Activated T-helper 2 cell treated with anti-CD3 and anti-CD28 coated beads, Interferon-gamma antibody, Interleukin-2, Interleukin-4, amounts not matched to agents 10 μg/mL and 5 μg/mL and 100 μg/mL, durations not matched to agents 14 hours and 24 hours and 36 hours (primary cell): ENCODE measurements at regions of chr16 and their contacts with region 1.

Region 1: DNA sequence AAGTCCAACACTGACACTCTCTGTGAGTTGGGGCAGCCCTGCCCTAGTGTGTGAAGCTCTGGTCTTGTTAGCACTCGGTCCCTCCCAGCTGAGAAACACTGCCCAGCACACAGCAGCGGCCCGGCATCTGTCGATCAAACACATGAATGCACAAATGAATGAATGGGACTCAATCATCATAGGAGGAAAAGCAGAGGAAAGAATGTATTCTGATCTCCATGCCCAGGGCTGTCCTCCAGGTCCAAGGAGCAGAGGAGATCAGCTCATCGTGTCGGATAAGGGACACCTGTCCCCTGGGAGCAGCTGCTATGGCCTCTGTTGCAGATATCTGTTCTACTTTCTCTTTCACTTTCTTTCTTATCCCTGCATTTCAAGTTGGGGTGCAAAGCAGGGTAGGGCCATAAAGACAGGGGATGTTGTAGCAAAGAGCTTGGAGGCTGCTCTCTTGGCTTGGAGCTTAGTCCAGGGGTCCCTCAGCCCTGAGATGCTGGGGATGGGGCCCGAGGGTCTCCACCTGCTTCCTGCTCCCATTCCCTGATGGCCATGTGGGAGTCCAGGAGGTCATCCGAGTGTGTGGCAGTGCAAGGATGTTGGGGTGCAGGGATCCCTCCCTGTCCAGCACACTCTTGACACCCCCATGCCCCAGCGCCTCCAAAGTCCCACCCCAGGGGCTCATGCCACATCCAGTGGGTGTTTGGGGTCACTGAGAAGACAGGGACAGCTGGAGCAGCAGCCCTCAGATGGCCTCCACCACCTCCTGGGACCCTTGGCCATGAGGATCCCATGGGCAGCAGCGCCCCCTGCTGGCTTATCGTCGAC is 88.2 kb downstream of the IRF8 start:
- DNase-seq: no peak
- H3K4me3 Mint-ChIP-seq: no peak overlapping the region
- H3K27ac Mint-ChIP-seq: peak overlapping the region; percentile 0
- H3K4me1 Mint-ChIP-seq: peaks cover 48% of the 10 kb centered on the region
- H3K27me3 Mint-ChIP-seq: no peaks in the 10 kb centered on the region

Region 2: DNA sequence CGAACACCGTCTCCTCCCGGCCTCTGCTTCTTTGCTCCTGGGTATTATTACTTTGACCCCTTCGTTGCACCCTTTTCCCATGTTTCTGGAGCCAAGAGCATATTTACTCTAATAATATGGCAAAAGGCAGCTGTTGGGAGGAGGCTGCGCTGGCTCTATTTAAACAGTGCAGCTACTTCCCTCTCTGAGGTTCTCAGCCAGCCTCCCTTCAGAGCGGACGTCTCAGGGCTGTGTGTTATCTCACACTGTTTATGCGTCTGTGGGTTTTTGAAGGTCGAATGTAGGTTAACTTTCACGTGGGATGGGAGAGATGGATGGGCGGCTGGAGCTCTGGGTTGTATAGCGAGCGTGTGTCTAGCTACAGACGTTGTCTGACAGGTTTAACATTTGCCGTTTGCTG is 142.4 kb before region 1 on chr16:
- intact Hi-C with region 1: no loop called
- DNase-seq: no peak
- H3K4me3 Mint-ChIP-seq: no peak overlapping the region
- H3K27ac Mint-ChIP-seq: no peak overlapping the region
- H3K4me1 Mint-ChIP-seq: peaks cover 4% of the 10 kb centered on the region
- H3K27me3 Mint-ChIP-seq: peaks cover 15% of the 10 kb centered on the region

Region 3: GRCh38 chr16:85869785-85870558 is 117.2 kb before region 1 on chr16:
- intact Hi-C with region 1: loop called (anchors 2 kb)
- DNase-seq: no peak
- H3K4me3 Mint-ChIP-seq: no peak overlapping the region
- H3K27ac Mint-ChIP-seq: no peak overlapping the region
- H3K4me1 Mint-ChIP-seq: peaks cover 26% of the 10 kb centered on the region
- H3K27me3 Mint-ChIP-seq: peaks cover 45% of the 10 kb centered on the region

Region 4: DNA sequence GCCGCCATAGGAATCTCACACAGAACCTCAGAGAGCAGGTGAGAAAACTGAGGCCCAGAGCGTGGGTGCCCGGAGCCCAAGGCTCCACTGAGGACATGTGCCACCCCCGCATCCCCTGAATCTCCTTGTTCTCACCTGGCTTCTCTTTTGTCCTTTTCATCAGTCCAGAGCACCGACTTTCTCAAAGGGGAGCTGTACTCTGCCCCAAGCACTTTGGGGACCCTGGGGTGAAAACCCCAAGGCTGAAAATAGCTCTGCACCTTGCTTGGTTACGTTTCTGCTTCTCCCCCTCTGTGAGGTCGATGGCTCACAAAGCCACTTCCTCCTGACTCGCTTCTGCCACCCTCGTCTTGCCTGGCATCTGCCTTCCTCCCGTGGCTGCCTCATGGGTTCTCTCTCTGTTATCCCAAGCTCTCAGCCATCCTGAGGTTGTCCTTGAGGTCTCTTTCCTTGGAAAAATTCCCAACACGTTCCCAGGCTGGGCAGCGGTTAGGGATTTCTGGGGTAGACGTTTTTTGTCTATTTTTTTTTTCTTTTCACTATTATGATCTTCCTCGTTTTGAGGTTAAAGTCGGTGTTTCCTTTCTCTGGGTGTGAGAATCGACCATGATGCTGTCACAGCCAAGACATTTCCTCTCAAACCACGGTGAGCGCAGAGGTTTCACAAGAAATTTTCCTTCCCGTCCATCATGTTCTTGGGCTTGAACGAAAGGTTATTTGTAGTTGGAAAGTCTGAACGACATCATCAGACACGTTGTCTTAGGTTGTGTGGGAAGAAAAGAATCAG is 51.0 kb before region 1 on chr16:
- intact Hi-C with region 1: loop called (anchors 1 kb)
- DNase-seq: peak; percentile 63
- H3K4me3 Mint-ChIP-seq: peak overlapping the region; percentile 32
- H3K27ac Mint-ChIP-seq: peak overlapping the region; percentile 92
- H3K4me1 Mint-ChIP-seq: peaks cover 55% of the 10 kb centered on the region
- H3K27me3 Mint-ChIP-seq: no peaks in the 10 kb centered on the region

Region 5: DNA sequence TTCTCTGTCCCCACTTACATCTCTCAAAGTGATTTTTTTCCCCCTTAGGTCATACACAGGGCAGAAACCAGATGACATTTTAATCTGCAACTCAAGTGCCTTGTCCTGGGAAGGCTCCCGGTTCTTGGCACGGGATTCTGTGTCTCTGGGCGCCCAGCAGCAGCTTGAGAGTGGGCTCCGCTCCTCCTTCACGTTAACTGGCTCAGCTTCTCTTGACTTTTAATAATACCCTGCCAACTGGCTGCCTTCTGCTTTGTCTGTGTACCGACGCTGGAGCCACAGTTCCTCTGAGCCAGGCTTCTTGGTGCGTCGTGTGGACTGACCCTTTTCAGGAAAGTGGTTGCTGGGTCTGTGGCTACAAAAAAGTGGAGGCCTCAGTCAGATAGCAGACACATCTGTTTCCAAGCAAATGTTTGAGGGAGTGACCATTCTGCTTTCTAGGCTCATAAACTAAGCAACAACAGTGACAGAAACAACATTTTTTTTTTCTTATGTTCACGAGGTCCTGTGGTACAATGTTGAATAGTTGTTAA is 23.3 kb before region 1 on chr16:
- intact Hi-C with region 1: no loop called
- DNase-seq: no peak
- H3K4me3 Mint-ChIP-seq: no peak overlapping the region
- H3K27ac Mint-ChIP-seq: no peak overlapping the region
- H3K4me1 Mint-ChIP-seq: peaks cover 10% of the 10 kb centered on the region
- H3K27me3 Mint-ChIP-seq: peaks cover 3% of the 10 kb centered on the region

Region 6: DNA sequence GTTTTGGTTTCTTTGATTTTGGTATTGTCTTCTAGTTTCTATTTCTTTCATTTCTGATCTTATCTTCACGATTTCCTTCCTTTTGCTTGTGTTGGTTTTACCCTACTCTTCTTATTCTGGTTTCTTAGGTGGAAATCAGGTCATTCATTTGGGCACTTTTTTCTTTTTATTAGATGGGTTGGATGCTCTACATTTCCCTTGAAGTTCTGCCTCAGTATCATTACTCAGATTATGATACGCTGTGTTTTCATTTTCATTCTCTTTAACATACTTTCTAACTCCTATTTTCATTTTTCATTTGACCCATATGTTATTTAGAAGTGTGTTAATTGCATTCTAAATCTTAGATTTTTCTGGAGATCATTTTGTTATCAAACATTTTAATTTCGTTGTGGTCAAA is 20.4 kb after region 1 on chr16:
- intact Hi-C with region 1: loop called (anchors 2 kb)
- DNase-seq: no peak
- H3K4me3 Mint-ChIP-seq: no peak overlapping the region
- H3K27ac Mint-ChIP-seq: no peak overlapping the region
- H3K4me1 Mint-ChIP-seq: peaks cover 14% of the 10 kb centered on the region
- H3K27me3 Mint-ChIP-seq: peaks cover 10% of the 10 kb centered on the region